Ascending aorta (tissue), 2 donors: ENCODE measurements at regions of chr18 and their contacts with region 1.

Region 1: DNA sequence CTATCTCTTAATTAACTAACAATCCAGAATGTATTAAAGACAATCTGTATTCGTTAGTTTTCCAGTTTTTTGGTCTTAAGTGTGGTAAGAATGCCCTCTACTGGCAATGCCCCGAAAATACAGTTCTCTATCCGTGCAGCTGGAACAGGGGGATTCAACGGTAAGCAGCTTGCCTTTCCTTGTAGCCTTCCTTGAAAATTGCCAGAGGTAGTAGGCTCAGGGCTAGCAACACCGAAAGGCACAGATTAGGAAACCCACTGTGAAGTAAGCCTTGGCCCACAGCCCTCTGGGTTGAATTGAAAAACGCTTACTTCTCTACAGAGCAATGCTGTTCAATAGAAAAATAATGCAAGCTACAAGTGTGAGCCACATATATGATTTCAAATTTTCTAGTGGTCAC is 17.1 kb upstream of the VPS4B start:
- DNase-seq: peak in 1 of 2 donors; percentile 74
- H3K4me3 ChIP-seq: no peak overlapping the region
- H3K27ac ChIP-seq: no peak overlapping the region
- H3K4me1 ChIP-seq: peaks cover 0 to 12% of the 10 kb centered on the region in 2 donors
- H3K27me3 ChIP-seq: no peaks in the 10 kb centered on the region
- CTCF ChIP-seq: peak; percentile 56 to 79 (median 63)

Region 2: DNA sequence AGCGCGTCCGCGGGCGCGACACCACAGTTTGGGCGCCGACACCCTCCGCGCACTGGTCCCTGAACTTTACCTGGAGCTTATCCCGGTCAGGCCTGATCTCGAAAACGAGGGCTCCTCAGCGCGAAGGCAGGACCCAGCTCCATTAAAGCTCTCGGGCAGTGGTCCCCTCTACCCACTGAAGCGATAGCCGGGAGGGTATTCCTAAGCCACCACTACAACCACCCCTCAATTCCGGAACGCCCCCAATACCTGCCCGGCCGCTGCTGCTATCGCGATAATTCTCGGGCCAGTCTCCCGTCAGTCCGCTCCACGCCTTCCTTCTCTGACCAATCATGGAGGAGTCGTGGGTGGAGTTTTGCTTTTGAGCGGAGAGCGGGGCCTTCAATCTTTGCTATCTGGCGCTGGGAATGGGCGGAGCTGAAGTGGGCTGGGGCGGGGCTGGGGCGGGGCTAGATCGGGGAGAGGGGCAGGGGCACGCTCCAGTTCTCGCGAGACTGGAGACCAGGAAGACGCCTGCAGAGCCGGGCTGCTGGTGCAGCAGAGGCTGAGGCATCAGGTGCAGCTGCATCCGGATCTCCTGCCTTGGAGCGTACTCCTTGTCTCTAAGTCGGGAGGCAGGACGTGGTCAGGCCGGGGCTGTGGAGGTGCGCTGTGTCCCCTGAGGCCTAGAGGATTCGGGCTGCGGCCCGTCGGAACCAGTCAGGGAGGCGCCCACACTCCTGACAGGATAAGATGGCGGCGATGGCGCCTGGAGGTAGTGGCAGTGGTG is 1252.4 kb before region 1 on chr18 and contains the starts of genes PIGN and RELCH:
- intact Hi-C with region 1: loop called (anchors 5 kb)
- DNase-seq: peak; percentile 96 to 99
- H3K4me3 ChIP-seq: peak within 1 kb of the TSS; percentile 79 to 98
- H3K27ac ChIP-seq: peak within 1 kb of the TSS; percentile 75 to 82
- H3K4me1 ChIP-seq: peaks cover 0 to 28% of the 10 kb centered on the region in 2 donors
- H3K27me3 ChIP-seq: no peaks in the 10 kb centered on the region
- CTCF ChIP-seq: no peak
- total RNA-seq, gene PIGN: 12.8 TPM
- total RNA-seq, gene RELCH: 26.4 TPM

Region 3: GRCh38 chr18:63016270-63016669 is 423.1 kb before region 1 on chr18:
- intact Hi-C with region 1: loop called (anchors 2 kb)
- DNase-seq: no peak
- H3K4me3 ChIP-seq: no peak overlapping the region
- H3K27ac ChIP-seq: no peak overlapping the region
- H3K4me1 ChIP-seq: no peaks in the 10 kb centered on the region
- H3K27me3 ChIP-seq: no peaks in the 10 kb centered on the region
- CTCF ChIP-seq: peak; percentile 74 to 79 (median 79)

Region 4: GRCh38 chr18:63131106-63131958 is 308.0 kb before region 1 on chr18:
- intact Hi-C with region 1: loop called (anchors 5 kb)
- DNase-seq: peak in 1 of 2 donors; percentile 87
- H3K4me3 ChIP-seq: no peak overlapping the region
- H3K27ac ChIP-seq: peak overlapping the region; percentile 56 to 64
- H3K4me1 ChIP-seq: peaks cover 0 to 11% of the 10 kb centered on the region in 2 donors
- H3K27me3 ChIP-seq: no peaks in the 10 kb centered on the region
- CTCF ChIP-seq: peak; percentile 70 to 80 (median 75)

Region 5: DNA sequence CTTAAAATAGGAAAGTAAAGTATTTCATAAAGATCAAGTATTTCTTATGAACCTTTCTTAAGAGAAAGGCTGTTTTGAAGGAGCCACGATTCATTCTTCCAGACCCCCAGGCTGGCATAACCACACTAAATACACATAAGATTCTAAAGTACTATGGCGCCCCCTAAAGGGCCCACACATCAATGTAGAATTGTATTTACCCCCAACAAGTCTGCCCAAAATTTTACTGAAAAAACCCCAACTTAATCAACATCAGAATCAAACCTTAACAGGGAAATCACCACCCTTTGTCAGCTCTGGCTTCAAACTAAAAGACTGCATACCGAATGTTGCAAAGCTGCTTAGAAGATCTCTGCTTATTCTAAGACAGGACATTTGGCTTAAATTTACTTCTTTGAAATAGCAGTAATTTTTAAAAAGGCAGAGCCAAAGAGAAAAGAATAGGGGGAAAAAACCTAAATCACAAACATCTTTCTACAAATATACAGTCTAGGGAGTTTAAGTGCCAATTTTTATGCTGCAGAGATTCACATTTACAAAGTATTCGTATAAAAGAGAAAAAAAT is 99.3 kb before region 1 on chr18:
- intact Hi-C with region 1: loop called (anchors 5 kb)
- DNase-seq: no peak
- H3K4me3 ChIP-seq: no peak overlapping the region
- H3K27ac ChIP-seq: no peak overlapping the region
- H3K4me1 ChIP-seq: no peaks in the 10 kb centered on the region
- H3K27me3 ChIP-seq: no peaks in the 10 kb centered on the region
- CTCF ChIP-seq: peak in 2 of 3 experiments; percentile 25 to 48

Region 6: DNA sequence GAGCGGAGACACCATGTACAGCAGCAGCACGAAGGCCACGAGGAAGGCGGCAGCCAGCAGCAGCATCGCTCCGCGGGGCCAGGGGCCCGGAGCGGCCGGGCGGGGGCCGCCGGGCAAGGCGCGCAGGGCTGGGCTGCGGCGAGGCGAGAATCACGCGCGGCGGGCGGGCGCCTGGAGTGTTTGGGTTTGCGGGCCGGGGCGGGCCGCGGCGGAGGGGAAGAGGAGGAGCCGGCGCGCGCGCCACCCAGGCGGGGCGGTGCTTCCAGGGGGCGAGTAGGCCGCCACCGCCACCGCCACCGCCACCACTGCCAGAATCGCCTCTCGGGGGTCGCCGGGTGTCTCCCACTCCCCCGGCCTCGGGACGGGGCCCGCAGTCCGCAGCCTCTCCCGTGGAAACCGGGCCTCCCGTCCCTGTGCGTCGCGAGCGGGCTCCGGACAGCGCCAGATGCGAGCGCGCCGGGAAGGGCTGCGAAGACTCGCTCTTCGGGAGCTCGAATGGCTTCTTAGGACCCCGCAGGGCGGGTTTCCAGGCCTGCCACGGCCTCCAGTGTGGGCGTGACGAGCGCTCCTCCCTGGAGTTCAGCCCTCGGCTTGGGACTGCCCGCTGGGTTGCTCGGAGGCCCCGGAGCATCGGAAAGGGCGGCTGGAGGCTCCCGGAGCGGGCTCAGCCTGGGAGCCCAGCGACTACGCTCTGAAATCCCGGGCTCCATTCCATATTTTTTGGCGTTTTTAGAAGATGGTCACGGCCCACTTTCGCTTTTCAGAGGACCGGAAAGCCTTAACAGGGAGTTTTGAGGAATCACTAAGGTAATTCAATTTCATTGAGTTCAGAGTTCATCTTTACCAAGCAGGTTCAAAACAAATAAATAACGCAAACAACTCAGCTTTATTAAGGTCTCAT is 72.0 kb before region 1 on chr18 and contains the start of gene KDSR:
- intact Hi-C with region 1: loop called (anchors 2 kb)
- DNase-seq: peak; percentile 85 to 98
- H3K4me3 ChIP-seq: peak within 1 kb of the TSS; percentile 87 to 92
- H3K27ac ChIP-seq: peak within 1 kb of the TSS; percentile 98
- H3K4me1 ChIP-seq: peaks cover 2 to 19% of the 10 kb centered on the region in 2 donors
- H3K27me3 ChIP-seq: no peaks in the 10 kb centered on the region
- CTCF ChIP-seq: no peak
- total RNA-seq, gene KDSR: 208 TPM